SK-MEL-5 (cell line): ENCODE measurements at regions of chr2 and their contacts with region 1.

Region 1: DNA sequence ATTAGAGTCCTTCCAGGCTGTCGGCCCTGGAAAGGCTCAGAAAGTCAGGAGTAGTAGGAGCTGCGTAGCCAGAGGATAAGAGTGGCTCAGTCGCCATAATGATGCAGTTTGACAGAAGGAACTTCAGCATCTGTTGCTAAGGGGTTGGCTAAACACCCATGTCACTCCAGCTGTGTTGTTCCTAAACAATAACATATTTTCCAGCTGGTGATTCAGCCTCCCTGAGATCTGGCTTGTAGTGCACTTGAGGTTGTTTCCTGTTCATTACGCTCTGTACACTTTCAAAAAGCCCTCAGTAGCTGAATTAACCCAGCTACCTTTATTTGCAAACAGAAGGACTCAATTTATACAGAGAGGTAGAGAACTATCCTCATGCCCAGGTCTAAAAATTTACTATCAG is 39.7 kb upstream of the EPAS1 start:
- DNase-seq: no peak

Region 2: GRCh38 chr2:46451131-46451711 is 193.7 kb after region 1 on chr2:
- in situ Hi-C with region 1: loop called (anchors 10 kb)
- DNase-seq: no peak